Activated CD4-positive, alpha-beta T cell treated with anti-CD3 and anti-CD28 coated beads, Interleukin-2, amount 10 ng/mL, durations not matched to agents 7 days and 5 days (primary cell): ENCODE measurements at regions of chr1 and their contacts with region 1.

Region 1: GRCh38 chr1:33993301-33993700 is 129.4 kb downstream of the HMGB4 start:
- DNase-seq: no peak
- H3K4me3 Mint-ChIP-seq: no peak overlapping the region
- H3K27ac Mint-ChIP-seq: no peak overlapping the region
- H3K4me1 Mint-ChIP-seq: no peaks in the 10 kb centered on the region
- H3K27me3 Mint-ChIP-seq: no peaks in the 10 kb centered on the region

Region 2: GRCh38 chr1:33654267-33654834 is 338.9 kb before region 1 on chr1:
- CTCF ChIA-PET with region 1: no interaction called
- POLR2A ChIA-PET with region 1: no interaction called
- DNase-seq: no peak
- H3K4me3 Mint-ChIP-seq: no peak overlapping the region
- H3K27ac Mint-ChIP-seq: no peak overlapping the region
- H3K4me1 Mint-ChIP-seq: no peaks in the 10 kb centered on the region
- H3K27me3 Mint-ChIP-seq: peaks cover 1% of the 10 kb centered on the region

Region 3: DNA sequence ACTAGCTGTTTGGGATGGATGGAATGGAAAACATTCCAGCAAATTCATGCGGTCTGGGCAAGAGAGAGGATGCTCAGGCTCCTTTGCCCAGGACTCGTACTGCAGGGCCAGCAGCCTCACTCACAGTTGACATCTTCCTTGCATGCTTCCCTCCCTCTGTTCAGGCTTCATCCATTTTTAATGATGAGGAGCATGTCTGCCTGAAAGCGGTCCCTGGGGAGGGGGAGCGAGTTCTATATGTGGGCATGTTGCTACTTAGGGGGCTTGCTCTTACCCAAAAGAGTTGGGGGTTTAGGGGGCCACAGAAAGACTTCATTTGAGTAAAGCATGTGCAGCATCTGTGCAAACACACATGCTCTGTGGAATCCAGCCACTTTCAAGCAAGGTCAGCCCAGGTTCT is 31.2 kb before region 1 on chr1:
- CTCF ChIA-PET with region 1: interaction called, 3 read pairs
- POLR2A ChIA-PET with region 1: interaction called, 14 read pairs
- DNase-seq: no peak
- H3K4me3 Mint-ChIP-seq: no peak overlapping the region
- H3K27ac Mint-ChIP-seq: no peak overlapping the region
- H3K4me1 Mint-ChIP-seq: no peaks in the 10 kb centered on the region
- H3K27me3 Mint-ChIP-seq: no peaks in the 10 kb centered on the region

Region 4: GRCh38 chr1:34013958-34014737 is 20.8 kb after region 1 on chr1:
- CTCF ChIA-PET with region 1: no interaction called
- POLR2A ChIA-PET with region 1: no interaction called
- DNase-seq: peak; percentile 8
- H3K4me3 Mint-ChIP-seq: no peak overlapping the region
- H3K27ac Mint-ChIP-seq: no peak overlapping the region
- H3K4me1 Mint-ChIP-seq: no peaks in the 10 kb centered on the region
- H3K27me3 Mint-ChIP-seq: no peaks in the 10 kb centered on the region